ENCODE measurements at regions of chr12 and their contacts with region 1.

Region 1: GRCh38 chr12:31832740-31833729 is 104.2 kb upstream of the AMN1 start:
- DNase-seq: no peak

Region 2: DNA sequence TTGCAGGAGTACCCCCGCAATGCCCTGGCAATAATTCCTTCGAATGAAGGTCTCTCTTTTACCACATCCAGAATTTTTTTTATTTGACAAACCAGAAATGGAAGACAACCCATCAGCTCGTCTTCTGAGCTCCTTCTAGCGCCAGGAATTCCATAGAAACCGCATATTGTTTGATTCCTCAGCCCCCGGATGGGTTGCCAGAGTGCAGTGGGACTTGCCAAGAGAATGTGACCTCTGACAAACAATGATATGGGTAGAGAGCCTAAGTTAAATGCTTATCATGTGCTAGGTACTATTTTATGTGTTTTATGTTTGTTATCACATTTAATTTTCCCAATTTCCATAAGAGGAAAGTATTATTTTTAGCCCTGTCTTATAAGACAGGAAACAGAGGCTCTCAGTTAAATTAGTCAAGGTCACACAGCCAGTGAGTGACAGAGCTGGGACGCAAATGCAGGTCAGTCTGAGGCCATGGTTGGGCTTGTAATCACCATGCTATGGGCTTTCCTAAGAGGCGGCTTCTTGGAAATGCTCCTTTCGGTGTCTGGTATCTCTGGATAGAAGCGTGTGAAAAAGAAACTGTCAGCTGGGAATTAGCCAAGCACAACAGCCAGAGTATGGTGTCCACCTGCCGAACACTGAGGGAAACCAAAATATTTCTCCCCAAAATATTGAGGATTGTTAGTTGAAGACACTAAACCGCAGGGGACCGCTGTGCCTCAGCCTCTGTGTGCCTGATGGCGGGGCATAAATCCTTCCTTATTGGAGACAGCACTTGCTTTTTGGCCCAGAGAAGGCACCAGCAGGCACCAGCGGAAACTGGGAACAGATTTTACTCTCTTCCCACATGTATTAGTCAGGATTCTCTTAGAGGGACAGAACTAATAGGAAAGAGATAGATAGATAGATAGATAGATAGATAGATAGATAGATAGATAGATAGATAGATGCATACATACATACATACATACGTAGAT is 203.0 kb before region 1 on chr12:
- intact Hi-C with region 1: no loop called
- DNase-seq: no peak

Region 3: GRCh38 chr12:31773867-31774266 is 59.2 kb before region 1 on chr12:
- intact Hi-C with region 1: loop called (anchors 10 kb)
- DNase-seq: no peak

Region 4: DNA sequence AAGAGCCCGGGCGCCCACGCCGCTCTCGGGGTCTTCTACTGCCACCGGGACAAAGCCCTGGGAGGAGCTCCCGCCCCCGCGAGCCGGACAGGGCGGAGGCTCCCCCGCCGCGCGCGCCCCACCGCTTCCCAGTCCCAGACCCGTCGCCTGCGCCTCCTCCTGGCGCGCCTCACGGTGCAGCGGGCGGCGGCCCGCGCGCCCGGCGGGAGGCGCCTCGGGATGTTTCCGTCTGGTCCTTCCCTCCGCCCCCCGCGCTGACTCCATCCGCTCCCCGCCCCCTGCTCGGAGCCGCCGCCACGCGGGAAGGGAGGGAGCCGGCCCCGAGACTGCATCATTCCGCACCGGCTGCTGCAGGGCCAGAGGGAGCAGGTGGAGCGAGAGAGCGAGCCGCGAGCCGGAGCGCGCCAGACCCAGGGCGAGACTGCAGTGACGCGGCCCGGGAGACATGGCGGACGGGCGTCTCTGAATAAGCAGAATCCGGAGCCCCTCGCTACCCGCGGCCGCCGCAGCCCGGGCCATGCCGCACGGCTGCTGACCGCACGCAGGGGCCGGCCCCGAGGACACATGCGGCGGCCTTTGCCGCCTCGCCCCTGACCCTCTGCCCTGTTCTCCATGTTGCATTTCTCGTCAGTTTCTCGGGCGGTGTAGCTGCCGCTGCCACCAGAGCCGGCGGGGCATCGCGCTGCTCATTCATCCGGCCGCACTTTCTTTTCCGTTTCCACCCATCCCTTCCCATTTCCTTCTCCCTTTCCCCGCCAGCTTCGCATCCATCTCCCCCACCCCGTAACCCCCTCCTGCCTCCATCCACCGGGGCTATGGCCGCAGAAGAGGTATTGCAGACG is 273.7 kb after region 1 on chr12 and contains the start of gene BICD1:
- intact Hi-C with region 1: no loop called
- DNase-seq: peak; percentile 86 to 98 (median 90)